Right ventricle myocardium inferior (tissue), 1 donor: ENCODE measurements at regions of chr10 and their contacts with region 1.

Region 1: DNA sequence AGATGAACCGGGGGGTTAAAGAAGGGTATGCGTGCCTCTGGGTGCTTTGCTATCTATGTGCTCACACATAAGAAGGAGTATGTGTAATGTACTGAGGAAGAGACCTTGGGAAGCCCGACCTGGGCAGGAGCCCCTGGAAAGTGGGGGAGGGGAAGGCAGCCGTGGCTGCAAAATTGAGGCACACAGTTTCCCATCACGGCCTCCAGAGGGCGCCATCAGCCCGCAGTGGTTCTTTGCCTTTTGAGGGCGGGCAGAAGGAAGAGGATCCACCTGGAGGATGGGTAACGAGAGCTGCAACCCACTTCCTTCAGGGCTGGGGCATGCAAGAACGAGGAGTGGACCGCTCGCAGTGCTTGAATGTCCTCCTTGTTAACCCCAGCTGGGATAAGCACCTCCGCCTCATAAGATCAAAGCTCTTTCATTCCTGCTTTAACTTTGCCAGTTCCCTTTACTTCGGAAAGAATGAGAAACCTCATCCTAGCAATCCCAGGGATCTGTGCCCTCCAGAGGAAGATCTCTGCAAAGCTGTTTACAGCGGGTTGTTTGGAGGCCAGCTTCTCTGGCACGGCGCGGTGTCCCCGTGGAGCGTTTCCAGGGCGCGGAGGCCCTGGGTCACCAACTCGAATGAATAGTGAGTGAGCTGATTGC is 77.9 kb downstream of the PCGF5 start:
- DNase-seq: peak; percentile 80
- ATAC-seq: peak; percentile 75

Region 2: DNA sequence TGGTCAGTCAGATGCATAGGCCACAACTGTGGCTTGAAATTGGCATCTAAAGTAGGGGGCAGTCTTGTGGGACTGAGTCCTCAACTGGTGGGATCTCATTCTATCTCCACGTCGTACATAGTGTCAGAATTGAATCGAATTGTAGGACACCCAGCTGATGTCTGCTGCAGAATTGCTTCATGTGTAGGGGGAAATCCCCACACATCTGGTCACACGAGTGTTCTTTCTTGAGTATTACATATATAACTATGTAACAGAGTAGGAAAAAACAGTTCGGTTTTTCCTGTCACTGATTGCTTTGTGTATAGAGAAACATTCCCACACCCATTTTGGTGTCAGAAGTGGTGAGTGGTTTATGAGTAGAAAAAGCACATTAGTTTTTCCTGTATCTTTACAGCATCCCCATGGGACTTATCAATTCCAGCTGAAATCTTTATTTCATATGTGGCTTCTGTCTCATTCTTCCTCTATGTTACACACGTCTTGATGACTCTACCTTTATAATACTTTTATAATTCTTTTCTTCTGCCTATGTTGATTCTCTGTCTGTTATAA is 157.3 kb before region 1 on chr10:
- intact Hi-C with region 1: no loop called
- DNase-seq: no peak
- ATAC-seq: no peak

Region 3: DNA sequence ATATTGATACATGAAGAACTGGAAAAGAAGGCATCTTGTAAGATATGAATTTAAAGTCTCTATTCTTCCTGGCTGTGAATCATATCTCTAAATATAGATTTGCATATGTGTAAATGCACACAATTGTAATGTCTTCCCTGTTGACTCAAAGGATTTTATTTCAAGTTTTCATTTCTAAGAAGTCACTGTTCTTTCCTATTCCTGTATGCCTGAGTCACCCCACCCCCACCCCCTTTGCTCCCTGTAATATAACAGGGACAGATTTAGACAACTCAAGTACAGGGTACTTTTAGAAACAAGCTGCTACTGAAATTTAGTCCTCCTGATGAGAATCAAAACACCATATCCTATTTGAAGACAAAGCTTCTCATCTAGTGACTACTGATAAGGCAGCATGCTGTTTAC is 68.8 kb after region 1 on chr10:
- intact Hi-C with region 1: loop called (anchors 5 kb)
- DNase-seq: no peak
- ATAC-seq: peak; percentile 74

Region 4: DNA sequence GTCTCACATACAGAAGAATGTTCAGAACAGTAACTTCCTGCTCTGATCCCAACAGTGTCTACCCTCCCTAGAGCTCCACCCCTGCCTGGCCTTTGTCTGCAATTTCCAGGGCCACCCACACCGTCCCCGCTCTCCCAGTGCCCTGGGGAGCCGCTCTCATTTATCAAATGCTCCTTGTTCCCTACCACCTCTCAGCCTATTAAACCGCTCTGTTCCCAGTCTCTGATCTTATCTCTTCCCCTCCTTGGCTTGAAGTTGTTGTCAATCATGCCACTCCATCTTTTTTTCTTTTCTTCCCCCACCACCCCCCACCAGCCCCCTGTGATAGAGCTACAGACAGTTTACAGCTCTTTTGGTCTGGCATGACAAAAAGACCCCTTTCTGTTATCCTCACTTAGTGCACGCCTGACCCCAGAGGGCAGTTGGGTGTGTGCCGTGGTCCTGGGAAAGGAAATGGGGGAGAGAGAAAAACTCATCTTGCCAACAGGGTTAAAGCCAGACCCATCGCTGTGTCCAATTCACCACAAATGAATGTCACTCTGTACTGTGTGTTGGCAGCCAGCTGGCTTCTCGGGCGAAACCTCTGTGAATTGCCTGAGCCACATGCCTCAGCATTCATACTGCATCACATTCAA is 83.0 kb after region 1 on chr10:
- intact Hi-C with region 1: loop called (anchors 5 kb)
- DNase-seq: no peak
- ATAC-seq: peak; percentile 82

Region 5: DNA sequence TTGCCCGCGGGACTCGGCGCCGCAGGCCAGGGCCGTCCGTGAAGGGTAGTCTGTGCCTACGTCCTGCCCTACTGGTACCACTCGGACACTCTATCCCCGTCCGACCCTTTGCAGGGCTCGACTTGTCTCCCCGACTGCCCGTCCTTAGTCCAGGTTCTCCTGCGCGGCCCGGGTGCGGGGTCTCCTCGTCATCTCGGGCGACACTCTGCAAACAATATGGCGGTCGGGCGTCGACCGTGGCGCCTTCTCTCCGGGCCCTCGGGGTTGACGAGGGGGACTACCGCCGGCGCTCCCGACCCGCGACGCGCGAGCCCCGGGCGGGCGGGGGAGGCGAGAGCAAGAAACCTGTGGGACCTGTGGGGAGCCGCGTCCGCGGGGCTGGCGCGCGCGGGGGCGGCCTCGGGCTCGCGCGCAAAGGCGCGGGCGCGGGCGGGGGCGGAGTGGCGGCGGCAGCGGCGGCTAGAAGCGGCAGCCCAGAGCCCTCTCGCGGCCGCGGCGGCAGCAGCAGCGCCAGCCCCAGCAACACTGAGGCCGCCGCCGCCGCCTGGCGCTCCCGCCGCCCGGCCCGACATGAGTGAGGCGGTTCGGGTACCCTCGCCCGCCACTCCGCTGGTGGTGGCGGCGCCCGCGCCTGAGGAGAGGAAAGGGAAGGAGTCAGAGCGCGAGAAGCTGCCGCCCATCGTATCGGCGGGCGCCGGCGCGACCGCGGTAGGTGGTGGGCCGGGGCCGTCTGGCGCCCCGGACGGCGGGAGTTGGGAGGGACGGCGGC is 111.7 kb after region 1 on chr10 and contains the start of gene HECTD2:
- intact Hi-C with region 1: loop called (anchors 2 kb)
- DNase-seq: peak; percentile 86
- ATAC-seq: peak; percentile 82
- total RNA-seq, gene HECTD2: 2.5 TPM

Region 6: DNA sequence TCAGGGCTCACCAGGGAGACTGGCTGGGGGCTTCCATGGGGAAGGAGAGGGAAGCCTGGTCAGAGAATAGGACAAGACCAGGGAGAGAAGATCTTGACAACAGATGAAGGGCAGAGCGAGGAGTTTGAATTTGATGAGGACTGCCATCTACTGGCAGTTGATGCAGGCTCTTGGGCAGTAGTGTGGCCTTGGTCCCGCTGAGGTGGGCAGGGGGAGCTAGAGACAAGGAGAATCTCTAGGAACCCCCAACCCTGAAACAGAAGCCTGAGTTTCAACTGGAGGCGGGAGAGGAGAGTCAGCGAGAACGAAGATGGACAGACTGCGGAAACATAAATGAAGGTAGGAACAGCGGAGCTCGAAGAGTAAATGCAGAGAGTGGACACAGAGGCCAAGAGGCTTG is 253.5 kb after region 1 on chr10:
- intact Hi-C with region 1: loop called (anchors 10 kb)
- DNase-seq: peak; percentile 64
- ATAC-seq: peak; percentile 82